ENCODE measurements at regions of chr1 and their contacts with region 1.

Region 1: DNA sequence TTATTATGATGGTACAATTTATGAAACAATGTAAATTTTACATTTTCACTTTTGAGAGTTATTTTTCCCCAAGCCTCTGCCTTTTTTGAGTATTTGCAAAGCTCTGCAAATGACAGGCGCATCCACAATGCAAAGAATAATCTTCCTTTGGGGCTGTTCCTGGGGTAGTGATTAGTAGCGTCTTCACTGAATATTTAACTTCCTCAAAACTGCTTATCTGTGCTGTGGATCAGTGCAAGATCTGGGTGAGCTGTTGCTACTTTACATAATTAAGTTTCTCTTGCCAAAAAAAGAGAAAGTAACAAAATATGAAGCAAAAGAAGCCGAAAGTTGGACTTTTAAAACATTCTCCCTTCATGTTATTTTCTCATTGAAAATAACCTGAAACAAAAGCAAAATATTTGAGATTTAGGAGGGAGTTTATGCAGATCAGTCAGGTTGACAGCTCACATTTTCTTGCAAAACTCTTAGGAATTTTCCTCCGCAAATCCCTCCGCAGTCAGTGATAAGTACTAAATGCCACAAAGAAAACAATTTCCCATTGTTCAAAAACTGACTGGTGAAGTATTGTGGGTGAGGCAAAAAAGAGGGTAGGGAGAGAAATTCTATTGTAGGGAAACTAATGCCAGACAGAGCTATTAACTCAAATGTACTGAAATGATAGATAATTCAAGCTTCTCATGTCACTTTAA is 276.4 kb upstream of the B3GALT2 start:
- DNase-seq: peak in 3 of 9 donors; percentile 3 to 33 (median 20)
- ATAC-seq: peak; percentile 72
- H3K4me3 ChIP-seq: peak overlapping the region; percentile 19
- H3K4me3 Mint-ChIP-seq: peak overlapping the region; percentile 3 to 82 (median 72)
- H3K27ac ChIP-seq: no peak overlapping the region
- H3K27ac Mint-ChIP-seq: peak overlapping the region; percentile 28 to 87 (median 65)
- H3K4me1 ChIP-seq: peaks cover 12 to 20% of the 10 kb centered on the region in 2 donors
- H3K4me1 Mint-ChIP-seq: peaks cover 18 to 41% (median 35%) of the 10 kb centered on the region in 7 donors
- H3K27me3 ChIP-seq: no peaks in the 10 kb centered on the region
- H3K27me3 Mint-ChIP-seq: no peaks in the 10 kb centered on the region

Region 2: DNA sequence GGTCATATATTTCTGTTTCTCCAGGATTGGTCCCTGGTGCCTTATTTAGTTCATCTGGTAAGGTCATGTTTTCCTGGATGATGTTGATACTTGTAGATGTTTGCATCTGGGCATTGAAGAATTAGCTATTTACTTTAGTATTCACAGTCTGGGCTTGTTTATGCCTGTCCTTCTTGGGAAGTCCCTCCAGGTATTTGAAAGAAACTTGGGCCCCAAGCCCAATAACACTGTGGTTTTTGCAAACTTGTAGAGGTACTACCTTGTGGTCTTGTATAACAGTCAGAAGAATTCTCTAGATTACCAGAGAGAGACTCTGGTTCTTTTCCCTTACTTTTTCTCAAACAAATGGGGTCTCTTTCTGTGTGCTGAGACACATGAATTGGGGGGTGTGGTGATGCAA is 25.0 kb before region 1 on chr1:
- CTCF ChIA-PET with region 1: no interaction called
- POLR2A ChIA-PET with region 1: no interaction called
- intact Hi-C with region 1: loop called in 1 of 2 experiments (anchors 2 kb)
- DNase-seq: no peak
- ATAC-seq: peak; percentile 31
- H3K4me3 ChIP-seq: no peak overlapping the region
- H3K4me3 Mint-ChIP-seq: peak overlapping the region in 1 of 10 donors; percentile 72
- H3K27ac ChIP-seq: no peak overlapping the region
- H3K27ac Mint-ChIP-seq: peak overlapping the region in 3 of 9 donors; percentile 36 to 92 (median 60)
- H3K4me1 ChIP-seq: peaks cover 5 to 12% of the 10 kb centered on the region in 2 donors
- H3K4me1 Mint-ChIP-seq: peaks cover 0 to 46% (median 12%) of the 10 kb centered on the region in 7 donors
- H3K27me3 ChIP-seq: no peaks in the 10 kb centered on the region
- H3K27me3 Mint-ChIP-seq: no peaks in the 10 kb centered on the region

Measured in naive thymus-derived CD4-positive, alpha-beta T cell (primary cell).